PC-9 (cell line): ENCODE measurements at regions of chr22 and their contacts with region 1.

Region 1: GRCh38 chr22:29344137-29344536 is 28.6 kb upstream of the RASL10A start:
- DNase-seq: peak; percentile 92 to 93
- H3K4me3 ChIP-seq: no peak overlapping the region
- H3K27ac ChIP-seq: no peak overlapping the region
- H3K4me1 ChIP-seq: peaks cover 41% of the 10 kb centered on the region
- H3K27me3 ChIP-seq: no peaks in the 10 kb centered on the region
- CTCF ChIP-seq: no peak

Region 2: GRCh38 chr22:29375398-29376076 is 31.4 kb after region 1 on chr22:
- CTCF ChIA-PET with region 1: no interaction called
- POLR2A ChIA-PET with region 1: no interaction called
- intact Hi-C with region 1: loop called (anchors 5 kb)
- DNase-seq: no peak
- H3K4me3 ChIP-seq: no peak overlapping the region
- H3K27ac ChIP-seq: peak overlapping the region; percentile 99
- H3K4me1 ChIP-seq: peaks cover 49% of the 10 kb centered on the region
- H3K27me3 ChIP-seq: no peaks in the 10 kb centered on the region
- CTCF ChIP-seq: no peak